ENCODE measurements at regions of chr7 and their contacts with region 1.

Region 1: GRCh38 chr7:45136106-45137060 is 21.2 kb upstream of the RAMP3 start:
- DNase-seq: peak; percentile 41 to 89 (median 66)
- ATAC-seq: peak; percentile 97
- H3K4me3 ChIP-seq: no peak overlapping the region
- H3K4me3 Mint-ChIP-seq: no peak overlapping the region
- H3K27ac ChIP-seq: no peak overlapping the region
- H3K27ac Mint-ChIP-seq: no peak overlapping the region
- H3K4me1 ChIP-seq: peaks cover 3% of the 10 kb centered on the region
- H3K4me1 Mint-ChIP-seq: peaks cover 4% of the 10 kb centered on the region
- H3K27me3 ChIP-seq: no peaks in the 10 kb centered on the region
- H3K27me3 Mint-ChIP-seq: peaks cover 4% of the 10 kb centered on the region
- CTCF ChIP-seq: peak; percentile 92

Region 2: GRCh38 chr7:44858161-44858560 is 278.2 kb before region 1 on chr7:
- CTCF ChIA-PET with region 1: interaction called, 106 read pairs
- POLR2A ChIA-PET with region 1: interaction called, 9 read pairs
- intact Hi-C with region 1: loop called in 1 of 2 experiments (anchors 1 kb)
- DNase-seq: no peak
- ATAC-seq: no peak
- H3K4me3 ChIP-seq: no peak overlapping the region
- H3K4me3 Mint-ChIP-seq: no peak overlapping the region
- H3K27ac ChIP-seq: no peak overlapping the region
- H3K27ac Mint-ChIP-seq: no peak overlapping the region
- H3K4me1 ChIP-seq: no peaks in the 10 kb centered on the region
- H3K4me1 Mint-ChIP-seq: peaks cover 5% of the 10 kb centered on the region
- H3K27me3 ChIP-seq: no peaks in the 10 kb centered on the region
- H3K27me3 Mint-ChIP-seq: no peaks in the 10 kb centered on the region
- CTCF ChIP-seq: peak; percentile 25

Region 3: GRCh38 chr7:44973610-44974401 is 162.6 kb before region 1 on chr7:
- CTCF ChIA-PET with region 1: interaction called, 157 read pairs
- POLR2A ChIA-PET with region 1: interaction called, 18 read pairs
- intact Hi-C with region 1: loop called (anchors 1 kb)
- DNase-seq: peak in 8 of 9 experiments; percentile 47 to 72 (median 67)
- ATAC-seq: peak; percentile 19
- H3K4me3 ChIP-seq: no peak overlapping the region
- H3K4me3 Mint-ChIP-seq: no peak overlapping the region
- H3K27ac ChIP-seq: no peak overlapping the region
- H3K27ac Mint-ChIP-seq: peak overlapping the region; percentile 66
- H3K4me1 ChIP-seq: peaks cover 36% of the 10 kb centered on the region
- H3K4me1 Mint-ChIP-seq: peaks cover 44% of the 10 kb centered on the region
- H3K27me3 ChIP-seq: no peaks in the 10 kb centered on the region
- H3K27me3 Mint-ChIP-seq: no peaks in the 10 kb centered on the region
- CTCF ChIP-seq: peak; percentile 59

Region 4: GRCh38 chr7:45026984-45027773 is 109.2 kb before region 1 on chr7:
- CTCF ChIA-PET with region 1: interaction called, 11 read pairs
- POLR2A ChIA-PET with region 1: no interaction called
- intact Hi-C with region 1: no loop called
- DNase-seq: peak in 7 of 9 experiments; percentile 26 to 75 (median 46)
- ATAC-seq: peak; percentile 63
- H3K4me3 ChIP-seq: peak overlapping the region; percentile 74 to 81
- H3K4me3 Mint-ChIP-seq: peak overlapping the region; percentile 87
- H3K27ac ChIP-seq: peak overlapping the region; percentile 73 to 80
- H3K27ac Mint-ChIP-seq: peak overlapping the region; percentile 91
- H3K4me1 ChIP-seq: peaks cover 42% of the 10 kb centered on the region
- H3K4me1 Mint-ChIP-seq: peaks cover 64% of the 10 kb centered on the region
- H3K27me3 ChIP-seq: no peaks in the 10 kb centered on the region
- H3K27me3 Mint-ChIP-seq: no peaks in the 10 kb centered on the region
- CTCF ChIP-seq: no peak

Region 5: GRCh38 chr7:45069444-45070253 is 66.7 kb before region 1 on chr7:
- CTCF ChIA-PET with region 1: interaction called, 15 read pairs
- POLR2A ChIA-PET with region 1: no interaction called
- intact Hi-C with region 1: no loop called
- DNase-seq: no peak
- ATAC-seq: no peak
- H3K4me3 ChIP-seq: no peak overlapping the region
- H3K4me3 Mint-ChIP-seq: no peak overlapping the region
- H3K27ac ChIP-seq: no peak overlapping the region
- H3K27ac Mint-ChIP-seq: peak overlapping the region; percentile 37
- H3K4me1 ChIP-seq: no peaks in the 10 kb centered on the region
- H3K4me1 Mint-ChIP-seq: peaks cover 18% of the 10 kb centered on the region
- H3K27me3 ChIP-seq: no peaks in the 10 kb centered on the region
- H3K27me3 Mint-ChIP-seq: no peaks in the 10 kb centered on the region
- CTCF ChIP-seq: no peak

Region 6: DNA sequence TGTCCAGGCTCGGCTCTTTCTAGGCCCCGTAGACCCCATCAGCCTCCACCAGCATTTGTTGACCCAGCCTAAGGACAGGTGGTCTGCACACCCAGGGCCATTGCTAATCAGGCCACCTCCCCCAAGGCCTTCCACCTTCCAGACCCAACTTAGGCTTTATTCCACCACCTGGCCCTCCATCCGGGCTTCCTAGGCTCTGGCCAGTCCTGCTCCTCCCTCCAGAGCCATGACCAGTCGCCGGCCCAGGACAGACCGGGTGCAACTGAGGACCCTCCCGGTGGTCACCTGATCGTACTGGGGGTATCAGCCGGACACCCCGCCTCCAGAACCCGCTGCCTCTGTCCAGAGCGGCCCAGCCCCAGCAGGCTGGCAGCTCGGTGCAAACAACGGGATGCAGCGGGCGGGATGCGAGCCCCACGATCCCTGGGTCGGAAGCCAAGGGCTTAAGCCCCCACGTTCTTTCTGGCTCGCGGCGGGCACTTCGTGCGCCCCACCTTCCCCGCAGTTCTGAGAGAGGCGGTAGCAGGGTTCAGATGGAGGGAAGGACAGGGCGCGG is 48.2 kb before region 1 on chr7:
- CTCF ChIA-PET with region 1: interaction called, 11 read pairs
- POLR2A ChIA-PET with region 1: no interaction called
- intact Hi-C with region 1: no loop called
- DNase-seq: no peak
- ATAC-seq: no peak
- H3K4me3 ChIP-seq: no peak overlapping the region
- H3K4me3 Mint-ChIP-seq: peak overlapping the region; percentile 59
- H3K27ac ChIP-seq: no peak overlapping the region
- H3K27ac Mint-ChIP-seq: peak overlapping the region; percentile 13
- H3K4me1 ChIP-seq: peaks cover 7% of the 10 kb centered on the region
- H3K4me1 Mint-ChIP-seq: peaks cover 8% of the 10 kb centered on the region
- H3K27me3 ChIP-seq: peaks cover 0 to 6% of the 10 kb centered on the region in 2 experiments
- H3K27me3 Mint-ChIP-seq: no peaks in the 10 kb centered on the region
- CTCF ChIP-seq: no peak

Region 7: GRCh38 chr7:45122975-45123860 is 13.2 kb before region 1 on chr7:
- CTCF ChIA-PET with region 1: interaction called, 22 read pairs
- POLR2A ChIA-PET with region 1: no interaction called
- intact Hi-C with region 1: no loop called
- DNase-seq: peak in 2 of 9 experiments; percentile 19 to 44
- ATAC-seq: peak; percentile 40
- H3K4me3 ChIP-seq: no peak overlapping the region
- H3K4me3 Mint-ChIP-seq: peak overlapping the region; percentile 32
- H3K27ac ChIP-seq: peak overlapping the region in 1 of 2 experiments; percentile 70
- H3K27ac Mint-ChIP-seq: peak overlapping the region; percentile 86
- H3K4me1 ChIP-seq: peaks cover 24% of the 10 kb centered on the region
- H3K4me1 Mint-ChIP-seq: peaks cover 15% of the 10 kb centered on the region
- H3K27me3 ChIP-seq: no peaks in the 10 kb centered on the region
- H3K27me3 Mint-ChIP-seq: peaks cover 2% of the 10 kb centered on the region
- CTCF ChIP-seq: no peak

Region 8: DNA sequence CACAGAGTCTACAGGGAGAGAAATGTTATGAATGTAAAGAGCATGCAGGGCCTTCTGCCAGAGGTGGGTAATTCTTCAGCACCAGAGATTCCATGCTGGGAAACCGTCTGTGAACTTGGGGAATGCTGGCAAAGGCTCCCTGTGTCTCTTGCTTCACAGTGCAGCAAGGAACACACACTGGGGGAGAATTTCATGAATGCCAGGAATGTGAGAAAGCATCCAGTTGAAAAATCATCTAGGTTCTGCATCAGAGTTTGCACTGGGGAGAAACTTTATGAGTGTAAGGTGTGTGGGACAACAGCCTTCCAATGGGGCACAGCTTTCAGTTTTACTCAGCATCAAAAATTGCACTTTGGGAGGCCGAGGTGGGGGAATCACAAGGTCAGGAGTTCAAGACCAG is 1009.0 kb after region 1 on chr7:
- CTCF ChIA-PET with region 1: no interaction called
- POLR2A ChIA-PET with region 1: no interaction called
- intact Hi-C with region 1: no loop called
- DNase-seq: no peak
- ATAC-seq: no peak
- H3K4me3 ChIP-seq: no peak overlapping the region
- H3K4me3 Mint-ChIP-seq: no peak overlapping the region
- H3K27ac ChIP-seq: no peak overlapping the region
- H3K27ac Mint-ChIP-seq: no peak overlapping the region
- H3K4me1 ChIP-seq: no peaks in the 10 kb centered on the region
- H3K4me1 Mint-ChIP-seq: no peaks in the 10 kb centered on the region
- H3K27me3 ChIP-seq: no peaks in the 10 kb centered on the region
- H3K27me3 Mint-ChIP-seq: no peaks in the 10 kb centered on the region
- CTCF ChIP-seq: no peak